Left ventricle myocardium superior (tissue), 1 donor: ENCODE measurements at regions of chr10 and their contacts with region 1.

Region 1: GRCh38 chr10:114095559-114096337 is 52.1 kb downstream of the ADRB1 start:
- DNase-seq: no peak
- ATAC-seq: no peak

Region 2: DNA sequence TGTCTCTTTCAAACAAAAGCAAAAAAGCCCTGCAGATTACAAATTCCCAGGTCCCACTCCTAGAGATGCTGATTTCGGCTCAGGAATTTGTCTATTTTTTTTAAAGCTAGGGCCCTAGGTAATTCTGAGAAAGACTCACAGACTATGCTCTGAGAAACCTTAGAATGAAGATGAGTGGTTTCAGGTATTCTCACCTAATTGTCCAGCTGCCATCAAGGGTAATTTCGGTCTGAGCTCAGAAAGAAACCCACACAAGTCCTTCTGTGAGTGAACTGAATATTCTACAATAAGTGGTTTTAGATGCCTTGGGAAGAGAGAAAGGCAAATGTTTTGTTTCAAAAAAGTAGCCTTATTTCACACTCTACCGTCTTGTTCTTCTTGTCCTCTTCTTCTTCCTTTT is 287.6 kb before region 1 on chr10:
- intact Hi-C with region 1: no loop called
- DNase-seq: no peak
- ATAC-seq: no peak

Region 3: GRCh38 chr10:113916053-113916452 is 179.7 kb before region 1 on chr10:
- intact Hi-C with region 1: loop called (anchors 10 kb)
- DNase-seq: no peak
- ATAC-seq: no peak